Left colon (tissue), 2 donors: ENCODE measurements at regions of chr2 and their contacts with region 1.

Region 1: GRCh38 chr2:39513641-39514094 is 76.6 kb upstream of the MAP4K3 start:
- DNase-seq: peak; percentile 47 to 49
- ATAC-seq: peak; percentile 68

Region 2: GRCh38 chr2:39394516-39394961 is 119.1 kb before region 1 on chr2:
- intact Hi-C with region 1: loop called in 1 of 2 experiments (anchors 10 kb)
- DNase-seq: no peak
- ATAC-seq: no peak

Region 3: GRCh38 chr2:39455826-39456225 is 57.8 kb before region 1 on chr2:
- intact Hi-C with region 1: no loop called
- DNase-seq: no peak
- ATAC-seq: no peak